ENCODE measurements at regions of chr17 and their contacts with region 1.

Region 1: DNA sequence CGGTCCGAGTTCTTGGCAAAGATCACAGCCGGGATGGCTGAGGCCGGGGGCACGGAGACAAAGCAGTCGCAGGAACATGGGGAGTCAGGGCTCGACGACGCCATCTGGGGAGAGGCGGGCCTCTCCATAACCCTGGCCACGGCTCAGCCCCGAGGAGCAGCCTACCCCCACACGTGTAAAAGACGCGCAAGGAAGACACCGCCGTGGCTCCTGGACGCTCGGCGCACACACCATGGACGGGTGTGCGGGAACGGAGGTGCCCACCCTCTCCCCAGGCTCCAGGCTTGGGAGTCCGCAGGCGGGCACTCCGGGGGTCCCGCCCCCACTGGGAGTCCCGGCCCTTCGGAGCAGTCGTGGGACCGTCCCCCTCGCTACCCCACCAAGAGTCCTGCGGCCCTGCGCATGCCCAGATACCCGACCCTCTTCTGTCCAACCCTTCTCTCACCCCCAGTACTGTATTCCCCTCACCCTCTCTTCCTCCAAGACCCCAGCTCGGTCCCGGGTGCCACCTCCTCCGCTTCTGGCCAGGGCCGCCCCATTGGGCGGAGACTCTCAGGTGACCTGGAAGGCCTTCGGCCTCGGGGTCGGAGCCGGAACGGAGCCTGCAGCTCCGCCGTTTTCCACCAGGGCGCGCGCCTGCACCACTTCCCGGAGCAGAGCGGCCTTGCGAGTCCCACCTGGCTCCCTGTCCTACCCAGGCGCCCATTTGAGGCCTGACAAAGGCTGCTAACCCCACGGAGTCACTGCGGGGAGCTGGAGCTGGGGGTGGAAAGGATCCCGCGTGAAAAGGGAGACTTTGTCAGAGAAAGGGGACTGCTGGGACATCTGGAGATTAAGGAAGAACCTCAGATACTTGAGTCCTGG is at the start of gene SCRN2:
- DNase-seq: peak; percentile 95
- CTCF ChIP-seq: peak; percentile 94

Region 2: GRCh38 chr17:47889734-47890529 is 49.0 kb after region 1 on chr17:
- in situ Hi-C with region 1: loop called (anchors 5 kb)
- DNase-seq: peak; percentile 82
- CTCF ChIP-seq: peak; percentile 92

Measured in GM13976 (cell line).